ENCODE measurements at regions of chr20 and their contacts with region 1.

Region 1: GRCh38 chr20:17898548-17898994 is 70.0 kb downstream of the SNX5 start:
- DNase-seq: peak; percentile 56 to 63 (median 60)
- H3K4me3 ChIP-seq: no peak overlapping the region
- H3K4me3 Mint-ChIP-seq: no peak overlapping the region
- H3K27ac ChIP-seq: no peak overlapping the region
- H3K27ac Mint-ChIP-seq: no peak overlapping the region
- H3K4me1 ChIP-seq: no peaks in the 10 kb centered on the region
- H3K4me1 Mint-ChIP-seq: peaks cover 4 to 8% (median 6%) of the 10 kb centered on the region in 4 donors
- H3K27me3 ChIP-seq: no peaks in the 10 kb centered on the region
- H3K27me3 Mint-ChIP-seq: peaks cover 13 to 20% of the 10 kb centered on the region in 2 donors

Region 2: DNA sequence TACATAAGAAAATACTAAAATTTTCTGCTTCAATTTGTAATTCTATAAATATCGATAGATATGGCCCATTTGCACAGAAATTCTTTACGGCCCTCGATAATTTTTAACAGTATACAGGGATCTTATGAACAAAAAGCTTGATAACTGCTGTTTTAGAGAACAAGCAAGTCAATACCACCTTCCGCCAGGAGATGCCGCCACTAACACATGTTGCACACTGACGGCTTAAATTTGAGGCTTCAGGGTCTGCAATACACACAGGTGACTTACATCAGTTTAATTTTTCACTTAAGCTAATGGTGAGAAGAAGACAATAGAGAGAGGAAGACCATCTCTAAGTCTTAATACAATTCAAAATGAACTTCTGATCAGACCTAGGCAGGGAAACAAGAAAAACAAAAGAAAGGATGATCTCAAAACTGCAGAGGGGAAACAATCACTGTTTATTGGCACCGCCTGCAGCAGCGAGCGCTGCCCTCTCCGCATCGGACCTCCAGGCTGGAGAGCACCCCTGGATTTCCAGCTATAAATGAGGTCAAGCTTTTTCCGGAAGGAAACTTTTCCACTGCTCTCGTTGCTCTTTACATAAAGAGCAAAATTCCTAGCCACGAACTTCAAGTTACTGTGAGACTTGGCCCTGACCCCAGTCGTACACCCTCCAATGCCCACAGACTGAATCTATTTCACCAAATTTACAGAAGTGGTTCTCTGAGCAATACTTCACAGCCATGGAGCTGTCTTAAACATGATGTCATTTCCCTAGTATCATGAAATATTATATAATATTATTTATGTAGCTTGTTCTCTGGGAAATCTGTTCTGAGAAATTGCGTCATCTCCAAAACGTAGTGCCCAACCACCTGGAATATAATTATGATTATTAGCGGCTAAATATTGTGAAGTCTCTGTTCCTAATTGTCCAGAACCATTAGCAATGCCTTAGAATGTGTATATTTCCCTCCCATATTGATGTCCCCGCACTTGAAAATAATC is 1096.4 kb before region 1 on chr20:
- CTCF ChIA-PET with region 1: no interaction called
- POLR2A ChIA-PET with region 1: no interaction called
- intact Hi-C with region 1: loop called (anchors 5 kb)
- DNase-seq: peak; percentile 20 to 45 (median 32)
- H3K4me3 ChIP-seq: no peak overlapping the region
- H3K4me3 Mint-ChIP-seq: no peak overlapping the region
- H3K27ac ChIP-seq: no peak overlapping the region
- H3K27ac Mint-ChIP-seq: no peak overlapping the region
- H3K4me1 ChIP-seq: no peaks in the 10 kb centered on the region
- H3K4me1 Mint-ChIP-seq: peaks cover 0 to 1% (median 0%) of the 10 kb centered on the region in 4 donors
- H3K27me3 ChIP-seq: no peaks in the 10 kb centered on the region
- H3K27me3 Mint-ChIP-seq: peaks cover 32 to 37% of the 10 kb centered on the region in 2 donors

Region 3: DNA sequence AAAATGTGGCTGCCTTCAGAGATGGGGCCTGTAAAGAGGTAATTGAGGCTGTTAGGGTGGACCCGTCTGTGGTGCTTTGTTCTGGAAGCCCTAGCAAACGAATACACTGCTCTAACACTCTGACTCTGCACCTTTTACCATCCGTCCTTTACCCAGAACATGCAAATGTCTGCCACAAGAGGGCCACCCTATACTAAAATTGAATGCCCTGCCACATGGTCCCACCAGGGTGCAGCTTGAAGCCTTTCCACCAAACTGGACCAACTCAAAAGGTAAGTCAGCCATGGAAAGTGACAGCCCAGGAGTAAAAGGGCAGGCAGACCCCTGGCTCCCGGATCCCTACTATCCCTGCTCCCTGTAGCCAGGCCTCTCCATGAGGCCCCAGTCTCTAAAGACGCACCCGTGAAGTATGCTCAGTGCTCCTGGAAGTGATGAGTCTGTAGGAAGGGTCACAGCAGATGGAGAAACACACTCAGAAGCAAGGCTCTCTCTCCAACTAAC is 361.6 kb before region 1 on chr20:
- CTCF ChIA-PET with region 1: interaction called, 8 read pairs
- POLR2A ChIA-PET with region 1: no interaction called
- intact Hi-C with region 1: loop called (anchors 1 kb)
- DNase-seq: peak; percentile 64 to 76 (median 70)
- H3K4me3 ChIP-seq: no peak overlapping the region
- H3K4me3 Mint-ChIP-seq: no peak overlapping the region
- H3K27ac ChIP-seq: no peak overlapping the region
- H3K27ac Mint-ChIP-seq: no peak overlapping the region
- H3K4me1 ChIP-seq: peaks cover 8% of the 10 kb centered on the region
- H3K4me1 Mint-ChIP-seq: peaks cover 10 to 18% (median 15%) of the 10 kb centered on the region in 4 donors
- H3K27me3 ChIP-seq: no peaks in the 10 kb centered on the region
- H3K27me3 Mint-ChIP-seq: peaks cover 16 to 20% of the 10 kb centered on the region in 2 donors

Region 4: GRCh38 chr20:17617551-17618223 is 280.9 kb before region 1 on chr20:
- CTCF ChIA-PET with region 1: interaction called, 14 read pairs
- POLR2A ChIA-PET with region 1: no interaction called
- intact Hi-C with region 1: no loop called
- DNase-seq: peak in 4 of 5 donors; percentile 33 to 46 (median 36)
- H3K4me3 ChIP-seq: no peak overlapping the region
- H3K4me3 Mint-ChIP-seq: no peak overlapping the region
- H3K27ac ChIP-seq: no peak overlapping the region
- H3K27ac Mint-ChIP-seq: peak overlapping the region in 1 of 7 donors; percentile 42
- H3K4me1 ChIP-seq: peaks cover 3% of the 10 kb centered on the region
- H3K4me1 Mint-ChIP-seq: peaks cover 2 to 9% (median 5%) of the 10 kb centered on the region in 4 donors
- H3K27me3 ChIP-seq: no peaks in the 10 kb centered on the region
- H3K27me3 Mint-ChIP-seq: no peaks in the 10 kb centered on the region

Region 5: GRCh38 chr20:17654649-17655285 is 243.8 kb before region 1 on chr20:
- CTCF ChIA-PET with region 1: interaction called, 5 read pairs
- POLR2A ChIA-PET with region 1: no interaction called
- intact Hi-C with region 1: loop called (anchors 10 kb)
- DNase-seq: no peak
- H3K4me3 ChIP-seq: no peak overlapping the region
- H3K4me3 Mint-ChIP-seq: no peak overlapping the region
- H3K27ac ChIP-seq: no peak overlapping the region
- H3K27ac Mint-ChIP-seq: peak overlapping the region in 1 of 7 donors; percentile 41
- H3K4me1 ChIP-seq: no peaks in the 10 kb centered on the region
- H3K4me1 Mint-ChIP-seq: peaks cover 0 to 5% (median 2%) of the 10 kb centered on the region in 4 donors
- H3K27me3 ChIP-seq: no peaks in the 10 kb centered on the region
- H3K27me3 Mint-ChIP-seq: no peaks in the 10 kb centered on the region

Region 6: GRCh38 chr20:17917832-17918618 is 19.5 kb after region 1 on chr20:
- CTCF ChIA-PET with region 1: no interaction called
- POLR2A ChIA-PET with region 1: no interaction called
- intact Hi-C with region 1: no loop called
- DNase-seq: no peak
- H3K4me3 ChIP-seq: no peak overlapping the region
- H3K4me3 Mint-ChIP-seq: no peak overlapping the region
- H3K27ac ChIP-seq: no peak overlapping the region
- H3K27ac Mint-ChIP-seq: no peak overlapping the region
- H3K4me1 ChIP-seq: no peaks in the 10 kb centered on the region
- H3K4me1 Mint-ChIP-seq: no peaks in the 10 kb centered on the region
- H3K27me3 ChIP-seq: no peaks in the 10 kb centered on the region
- H3K27me3 Mint-ChIP-seq: peaks cover 7 to 10% of the 10 kb centered on the region in 2 donors

Region 7: DNA sequence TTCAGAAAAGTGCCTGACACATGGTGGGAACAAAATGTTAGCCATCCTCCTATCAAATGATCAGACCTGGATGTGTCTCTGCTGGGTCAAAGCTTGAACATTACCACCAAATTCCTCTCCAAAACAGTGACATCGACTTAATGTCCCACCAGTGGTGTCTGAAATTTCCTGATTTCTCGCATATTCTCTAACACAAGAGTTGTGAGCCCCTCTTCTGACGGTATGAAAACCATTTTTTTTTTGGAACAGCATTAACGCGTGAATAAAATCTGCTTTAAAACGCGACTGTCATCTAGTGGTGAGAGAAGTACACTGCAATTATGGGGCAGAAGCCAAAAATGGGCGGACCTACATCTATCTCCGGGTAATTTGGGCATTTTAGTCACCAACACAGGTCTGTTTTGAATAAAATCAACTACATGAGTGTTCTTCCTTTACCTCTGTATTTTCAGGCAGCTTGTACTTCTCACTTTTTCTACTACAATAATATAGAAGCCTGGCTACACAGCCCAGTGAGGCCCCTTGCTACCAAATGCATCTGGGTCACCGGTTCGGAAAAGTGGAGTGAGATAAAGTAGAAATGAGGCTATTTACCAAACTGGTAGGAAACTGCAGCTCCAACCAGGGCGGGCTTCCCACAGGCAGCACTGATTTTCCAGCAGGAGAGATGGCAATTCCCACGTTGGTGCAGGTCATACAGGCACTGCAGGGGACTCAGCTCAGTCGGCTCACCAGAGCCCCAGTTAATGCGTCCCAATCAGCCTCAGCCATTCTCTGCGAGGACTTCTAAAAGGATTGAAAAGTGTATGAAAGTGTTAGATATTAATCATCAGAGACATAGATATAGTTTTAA is 97.6 kb after region 1 on chr20:
- CTCF ChIA-PET with region 1: interaction called, 5 read pairs
- POLR2A ChIA-PET with region 1: no interaction called
- intact Hi-C with region 1: loop called (anchors 2 kb)
- DNase-seq: peak; percentile 55 to 68 (median 64)
- H3K4me3 ChIP-seq: no peak overlapping the region
- H3K4me3 Mint-ChIP-seq: peak overlapping the region in 1 of 8 donors; percentile 29
- H3K27ac ChIP-seq: no peak overlapping the region
- H3K27ac Mint-ChIP-seq: peak overlapping the region in 1 of 7 donors; percentile 6
- H3K4me1 ChIP-seq: peaks cover 18% of the 10 kb centered on the region
- H3K4me1 Mint-ChIP-seq: peaks cover 13 to 27% (median 19%) of the 10 kb centered on the region in 4 donors
- H3K27me3 ChIP-seq: no peaks in the 10 kb centered on the region
- H3K27me3 Mint-ChIP-seq: peaks cover 0 to 3% of the 10 kb centered on the region in 2 donors